WTC11 (cell line): ENCODE measurements at regions of chr21 and their contacts with region 1.

Region 1: DNA sequence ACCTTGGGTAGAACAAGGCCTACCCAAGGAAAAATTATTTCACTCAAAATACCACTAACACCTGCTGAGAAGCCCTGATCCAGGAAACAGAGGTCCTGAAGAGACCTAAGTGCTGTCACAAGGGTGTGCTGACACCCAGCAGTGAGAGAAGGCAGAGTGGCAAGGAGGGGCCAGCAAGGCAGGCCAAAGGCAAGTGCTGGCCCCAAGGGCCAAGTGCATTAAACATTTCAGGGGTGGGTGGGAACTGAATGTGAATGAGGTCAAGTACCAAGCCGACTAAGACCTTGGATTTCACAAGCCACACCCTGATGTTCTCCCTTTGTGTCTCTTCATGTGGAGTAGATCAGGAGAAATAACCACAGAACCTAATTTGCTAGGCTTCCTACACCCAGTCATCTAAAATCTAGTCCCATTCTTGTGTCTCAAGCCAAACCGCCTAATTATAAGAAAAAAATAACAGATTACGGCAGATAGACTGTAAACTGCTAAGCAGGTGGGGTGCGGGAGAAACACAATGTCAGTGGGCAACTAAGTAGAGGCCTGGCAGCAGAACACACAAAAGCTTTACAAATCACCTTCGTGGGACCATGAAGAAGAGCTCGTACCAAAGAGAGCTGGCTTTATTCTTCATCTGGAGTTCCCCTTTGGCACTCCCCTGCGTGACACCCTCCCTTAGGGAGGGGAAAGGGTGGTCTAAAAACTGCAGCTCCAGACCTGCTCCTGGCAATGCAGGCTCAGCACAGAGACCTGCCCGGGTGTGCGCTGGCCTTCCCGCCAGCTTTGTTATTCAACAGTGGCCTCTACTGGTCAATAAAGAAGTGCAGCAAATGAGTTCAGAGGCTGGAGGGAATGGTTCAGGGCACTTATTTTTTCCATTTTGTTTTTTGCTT is 8.7 kb downstream of the UBE2G2 start:
- DNase-seq: peak; percentile 52
- ATAC-seq: peak; percentile 96
- H3K4me3 Mint-ChIP-seq: no peak overlapping the region
- H3K27ac Mint-ChIP-seq: peak overlapping the region; percentile 80
- H3K4me1 Mint-ChIP-seq: peaks cover 24% of the 10 kb centered on the region
- H3K27me3 Mint-ChIP-seq: no peaks in the 10 kb centered on the region
- CTCF ChIP-seq: peak; percentile 54

Region 2: GRCh38 chr21:44593598-44594405 is 199.1 kb before region 1 on chr21:
- CTCF ChIA-PET with region 1: no interaction called
- POLR2A ChIA-PET with region 1: no interaction called
- DNase-seq: no peak
- ATAC-seq: peak; percentile 31
- H3K4me3 Mint-ChIP-seq: no peak overlapping the region
- H3K27ac Mint-ChIP-seq: peak overlapping the region; percentile 6
- H3K4me1 Mint-ChIP-seq: peaks cover 41% of the 10 kb centered on the region
- H3K27me3 Mint-ChIP-seq: no peaks in the 10 kb centered on the region; the same call in 1 of the 2 replicates
- CTCF ChIP-seq: no peak

Region 3: DNA sequence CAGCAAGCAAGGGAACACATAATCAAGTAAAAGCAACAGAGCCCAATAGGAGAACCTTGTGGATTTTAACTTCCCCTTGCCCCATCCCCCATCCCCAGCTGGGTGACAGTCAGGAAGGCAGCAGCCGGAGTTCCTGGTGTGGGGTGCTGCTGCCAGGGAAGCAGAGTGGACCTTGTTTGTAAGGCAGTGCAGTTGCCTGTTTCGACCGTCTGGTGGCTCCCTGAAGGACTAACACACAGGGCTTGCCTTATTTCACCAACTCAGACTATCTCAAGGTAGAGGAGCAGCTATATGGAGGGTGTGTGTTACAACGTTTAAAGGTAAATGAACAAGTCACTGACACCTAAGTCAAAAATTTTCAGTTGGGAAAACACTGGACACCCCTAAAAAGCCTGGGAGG is 174.4 kb before region 1 on chr21:
- CTCF ChIA-PET with region 1: interaction called, 16 read pairs
- POLR2A ChIA-PET with region 1: no interaction called
- DNase-seq: peak; percentile 40
- ATAC-seq: peak; percentile 81
- H3K4me3 Mint-ChIP-seq: no peak overlapping the region
- H3K27ac Mint-ChIP-seq: no peak overlapping the region
- H3K4me1 Mint-ChIP-seq: peaks cover 31% of the 10 kb centered on the region
- H3K27me3 Mint-ChIP-seq: peaks cover 2% of the 10 kb centered on the region; the same call in 1 of the 2 replicates
- CTCF ChIP-seq: no peak

Region 4: DNA sequence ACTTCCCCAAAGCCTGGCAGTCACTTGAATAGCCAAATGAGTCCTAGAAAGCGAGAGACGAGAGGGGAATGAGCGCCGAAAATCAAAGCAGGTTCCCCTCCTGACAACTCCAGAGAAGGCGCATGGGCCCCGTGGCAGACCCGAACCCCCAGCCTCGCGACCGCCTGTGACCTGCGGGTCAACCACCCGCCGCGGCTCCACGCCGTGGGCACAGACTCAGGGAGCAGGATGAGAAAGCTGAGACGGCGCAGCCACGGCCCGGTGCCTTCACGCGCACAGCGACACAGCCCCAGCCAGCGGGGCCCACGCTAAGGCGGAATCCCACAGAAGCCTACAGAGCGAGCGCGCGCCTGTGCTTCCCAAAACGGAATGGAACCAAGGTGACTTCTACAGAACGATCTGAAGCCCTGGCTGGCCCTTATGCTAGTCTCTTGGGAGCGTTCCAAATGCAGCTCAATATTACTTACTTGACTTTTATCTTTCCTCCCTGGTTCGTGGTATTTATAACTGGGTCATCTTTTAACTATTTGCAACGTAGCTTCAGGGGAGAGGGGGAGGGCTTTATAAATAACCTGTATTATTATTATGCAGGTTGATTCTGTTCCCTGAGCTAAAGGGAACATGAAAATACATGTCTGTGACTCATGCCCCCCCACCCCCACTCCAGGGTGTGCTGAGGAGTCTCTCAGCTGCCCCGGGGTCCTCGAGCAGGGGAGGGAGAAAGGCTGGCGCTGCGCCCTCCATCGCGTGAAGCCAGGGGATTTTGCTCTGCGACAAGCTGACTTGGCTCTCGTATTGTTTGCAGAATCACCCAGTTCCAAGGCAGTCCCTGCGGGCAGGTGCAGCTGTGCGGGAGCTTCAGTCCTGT is 83.3 kb before region 1 on chr21:
- CTCF ChIA-PET with region 1: interaction called, 21 read pairs
- POLR2A ChIA-PET with region 1: no interaction called
- DNase-seq: no peak
- ATAC-seq: no peak
- H3K4me3 Mint-ChIP-seq: peak overlapping the region; percentile 63
- H3K27ac Mint-ChIP-seq: peak overlapping the region; percentile 89; the same call in 1 of the 2 replicates
- H3K4me1 Mint-ChIP-seq: peaks cover 75% of the 10 kb centered on the region
- H3K27me3 Mint-ChIP-seq: peaks cover 86% of the 10 kb centered on the region
- CTCF ChIP-seq: no peak

Region 5: DNA sequence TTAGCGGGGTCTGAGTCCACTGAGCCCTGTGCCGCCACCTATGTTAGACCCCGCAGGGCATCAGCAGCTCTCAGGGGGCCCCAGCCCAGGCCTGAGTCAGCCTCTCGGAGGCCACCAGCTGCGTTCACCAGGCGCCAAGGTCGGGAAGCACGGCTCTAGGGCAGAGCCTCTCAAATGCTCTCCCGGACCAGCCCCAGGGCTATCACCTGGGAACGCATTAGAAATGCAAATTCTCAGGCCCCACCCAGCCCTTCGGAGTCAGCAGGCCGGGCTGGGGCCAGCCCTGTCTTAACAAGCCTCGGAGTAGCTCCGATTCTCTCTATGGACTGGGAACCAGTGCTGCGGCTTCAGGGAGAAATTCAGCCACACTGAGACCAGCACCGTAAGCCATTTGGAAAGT is 44.3 kb before region 1 on chr21:
- CTCF ChIA-PET with region 1: interaction called, 21 read pairs
- POLR2A ChIA-PET with region 1: no interaction called
- DNase-seq: peak; percentile 84
- ATAC-seq: peak; percentile 93
- H3K4me3 Mint-ChIP-seq: peak overlapping the region; percentile 75
- H3K27ac Mint-ChIP-seq: peak overlapping the region; percentile 99
- H3K4me1 Mint-ChIP-seq: peaks cover 54% of the 10 kb centered on the region
- H3K27me3 Mint-ChIP-seq: peaks cover 22% of the 10 kb centered on the region
- CTCF ChIP-seq: no peak

Region 6: GRCh38 chr21:44780767-44781459 is 12.0 kb before region 1 on chr21:
- CTCF ChIA-PET with region 1: interaction called, 12 read pairs
- POLR2A ChIA-PET with region 1: no interaction called
- DNase-seq: no peak
- ATAC-seq: no peak
- H3K4me3 Mint-ChIP-seq: no peak overlapping the region
- H3K27ac Mint-ChIP-seq: no peak overlapping the region; the same call in 1 of the 2 replicates
- H3K4me1 Mint-ChIP-seq: no peaks in the 10 kb centered on the region
- H3K27me3 Mint-ChIP-seq: no peaks in the 10 kb centered on the region
- CTCF ChIP-seq: no peak

Region 7: DNA sequence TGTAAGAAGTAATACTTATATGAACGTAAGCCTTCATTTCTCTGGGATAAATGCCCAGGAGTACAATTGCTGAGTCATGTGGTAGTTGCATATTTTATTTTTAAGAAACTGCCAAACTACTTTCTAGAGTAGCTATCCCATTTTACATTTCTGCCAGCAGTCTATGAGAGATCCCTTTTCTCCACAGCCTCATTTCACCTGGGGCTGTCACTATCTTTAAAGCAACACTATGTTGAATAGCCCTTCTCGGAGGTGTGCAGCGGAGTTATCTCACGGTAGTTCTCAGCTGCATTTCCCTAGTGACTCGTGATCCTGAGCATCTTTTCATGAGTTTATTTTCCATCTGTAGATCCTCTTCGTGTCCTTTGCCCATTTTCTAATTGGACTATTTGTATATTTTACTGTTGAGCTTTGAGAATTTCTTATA is 374.9 kb after region 1 on chr21:
- CTCF ChIA-PET with region 1: no interaction called
- POLR2A ChIA-PET with region 1: no interaction called
- DNase-seq: no peak
- ATAC-seq: no peak
- H3K4me3 Mint-ChIP-seq: no peak overlapping the region
- H3K27ac Mint-ChIP-seq: no peak overlapping the region
- H3K4me1 Mint-ChIP-seq: no peaks in the 10 kb centered on the region
- H3K27me3 Mint-ChIP-seq: no peaks in the 10 kb centered on the region
- CTCF ChIP-seq: no peak